H1 (cell line): ENCODE measurements at regions of chr4 and their contacts with region 1.

Region 1: GRCh38 chr4:87961993-87962392 is 13.5 kb upstream of the SPP1 start:
- DNase-seq: no peak
- H3K4me3 ChIP-seq: no peak overlapping the region
- H3K27ac ChIP-seq: no peak overlapping the region
- H3K4me1 ChIP-seq: peaks cover 0 to 4% (median 2%) of the 10 kb centered on the region in 4 experiments; a peak in 2 of 7 replicates
- H3K27me3 ChIP-seq: no peaks in the 10 kb centered on the region; a peak in 1 of 7 replicates
- CTCF ChIP-seq: no peak
- EP300 ChIP-seq: no peak
- POLR2A ChIP-seq: no peak
- RAD21 ChIP-seq: no peak

Region 2: DNA sequence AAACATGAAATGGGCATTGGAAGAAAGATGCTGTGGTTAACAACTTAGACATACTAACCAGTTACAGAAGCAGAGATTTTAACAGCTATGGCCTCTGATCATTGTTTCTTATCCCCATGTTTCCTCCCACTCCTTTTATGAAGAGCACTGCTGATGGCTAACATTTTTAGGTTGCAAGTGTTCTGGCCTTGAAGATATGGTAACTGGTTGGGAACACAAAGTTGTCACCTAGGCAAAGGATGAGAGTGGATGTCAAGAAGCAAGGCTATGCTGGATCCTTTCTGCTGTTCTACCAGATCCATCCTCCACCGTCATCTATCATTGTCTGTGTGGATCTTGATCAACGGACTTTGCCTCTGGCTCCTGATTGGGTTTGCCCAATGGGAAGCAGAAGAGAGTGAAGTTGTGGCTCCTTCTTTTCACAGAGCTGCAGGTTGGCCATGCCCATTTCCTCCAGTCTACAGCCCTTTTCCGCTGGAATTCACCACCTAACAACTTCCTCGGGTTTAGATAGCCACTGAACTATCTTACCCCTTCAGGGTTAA is 35.4 kb before region 1 on chr4:
- CTCF ChIA-PET with region 1: no interaction called
- POLR2A ChIA-PET with region 1: interaction called, 33 read pairs
- DNase-seq: no peak
- H3K4me3 ChIP-seq: peak overlapping the region; percentile 34 to 69 (median 36)
- H3K27ac ChIP-seq: no peak overlapping the region
- H3K4me1 ChIP-seq: peaks cover 0 to 3% (median under 1%) of the 10 kb centered on the region in 4 experiments; a peak in 1 of 7 replicates
- H3K27me3 ChIP-seq: no peaks in the 10 kb centered on the region
- CTCF ChIP-seq: no peak
- EP300 ChIP-seq: no peak
- POLR2A ChIP-seq: peak; percentile 63 to 90
- RAD21 ChIP-seq: no peak

Region 3: DNA sequence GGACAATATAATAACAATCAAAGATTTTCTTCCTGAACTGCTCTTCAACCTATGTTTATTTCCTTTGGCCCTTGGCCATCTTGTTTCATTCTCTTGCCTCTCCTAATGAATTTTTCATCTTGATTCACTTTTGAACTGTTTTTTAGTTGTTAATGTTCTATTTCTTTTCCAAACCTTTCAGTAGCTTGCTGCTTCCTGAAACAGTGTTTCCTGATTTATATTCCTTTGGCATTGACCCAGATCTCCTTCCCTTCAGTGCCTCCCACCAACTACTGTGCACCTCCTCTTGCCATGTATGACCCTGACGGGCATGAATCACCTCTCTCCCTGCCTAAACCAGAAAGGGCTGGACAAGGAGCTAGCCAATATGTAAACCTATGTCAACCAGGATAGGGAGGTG is 12.0 kb before region 1 on chr4:
- CTCF ChIA-PET with region 1: interaction called, 94 read pairs
- POLR2A ChIA-PET with region 1: interaction called, 88 read pairs
- DNase-seq: no peak
- H3K4me3 ChIP-seq: no peak overlapping the region
- H3K27ac ChIP-seq: no peak overlapping the region
- H3K4me1 ChIP-seq: peaks cover 0 to 4% (median 1%) of the 10 kb centered on the region in 4 experiments; a peak in 5 of 7 replicates
- H3K27me3 ChIP-seq: no peaks in the 10 kb centered on the region; a peak in 1 of 7 replicates
- CTCF ChIP-seq: no peak
- EP300 ChIP-seq: no peak
- POLR2A ChIP-seq: no peak
- RAD21 ChIP-seq: no peak

Region 4: DNA sequence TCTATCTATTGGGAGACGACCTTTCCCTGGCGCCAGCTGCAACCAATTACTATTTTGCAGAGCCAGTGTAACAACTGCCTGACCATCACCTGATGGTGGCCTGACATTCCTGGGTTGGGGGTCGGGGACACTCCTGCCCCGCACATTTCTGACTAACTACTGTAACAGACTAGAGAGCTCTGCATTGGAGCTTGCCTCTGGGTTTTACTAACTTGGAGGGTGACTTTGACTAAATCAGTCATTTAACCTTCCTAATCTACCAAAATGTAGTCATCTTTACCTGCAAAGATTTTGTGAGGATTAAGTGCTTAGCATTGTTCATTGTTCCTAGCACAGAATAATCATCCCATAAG is 234.0 kb after region 1 on chr4:
- CTCF ChIA-PET with region 1: no interaction called
- POLR2A ChIA-PET with region 1: no interaction called
- DNase-seq: peak in 1 of 2 experiments; percentile 51
- H3K4me3 ChIP-seq: no peak overlapping the region
- H3K27ac ChIP-seq: no peak overlapping the region
- H3K4me1 ChIP-seq: peaks cover 2 to 8% (median 4%) of the 10 kb centered on the region in 4 experiments; a peak in 3 of 7 replicates
- H3K27me3 ChIP-seq: no peaks in the 10 kb centered on the region
- CTCF ChIP-seq: no peak
- EP300 ChIP-seq: no peak
- POLR2A ChIP-seq: no peak
- RAD21 ChIP-seq: no peak